OCI-LY7 (cell line): ENCODE measurements at regions of chr1 and their contacts with region 1.

Region 1: GRCh38 chr1:170586321-170587252 is 54.6 kb downstream of the GORAB start:
- DNase-seq: no peak
- H3K4me3 ChIP-seq: no peak overlapping the region
- H3K27ac ChIP-seq: no peak overlapping the region
- H3K4me1 ChIP-seq: no peaks in the 10 kb centered on the region
- CTCF ChIP-seq: no peak

Region 2: GRCh38 chr1:170494369-170494768 is 92.2 kb before region 1 on chr1:
- CTCF ChIA-PET with region 1: no interaction called
- POLR2A ChIA-PET with region 1: interaction called, 3 read pairs
- intact Hi-C with region 1: loop called (anchors 10 kb)
- DNase-seq: no peak
- H3K4me3 ChIP-seq: no peak overlapping the region
- H3K27ac ChIP-seq: no peak overlapping the region
- H3K4me1 ChIP-seq: no peaks in the 10 kb centered on the region
- CTCF ChIP-seq: no peak